ENCODE measurements at regions of chr13 and their contacts with region 1.

Region 1: DNA sequence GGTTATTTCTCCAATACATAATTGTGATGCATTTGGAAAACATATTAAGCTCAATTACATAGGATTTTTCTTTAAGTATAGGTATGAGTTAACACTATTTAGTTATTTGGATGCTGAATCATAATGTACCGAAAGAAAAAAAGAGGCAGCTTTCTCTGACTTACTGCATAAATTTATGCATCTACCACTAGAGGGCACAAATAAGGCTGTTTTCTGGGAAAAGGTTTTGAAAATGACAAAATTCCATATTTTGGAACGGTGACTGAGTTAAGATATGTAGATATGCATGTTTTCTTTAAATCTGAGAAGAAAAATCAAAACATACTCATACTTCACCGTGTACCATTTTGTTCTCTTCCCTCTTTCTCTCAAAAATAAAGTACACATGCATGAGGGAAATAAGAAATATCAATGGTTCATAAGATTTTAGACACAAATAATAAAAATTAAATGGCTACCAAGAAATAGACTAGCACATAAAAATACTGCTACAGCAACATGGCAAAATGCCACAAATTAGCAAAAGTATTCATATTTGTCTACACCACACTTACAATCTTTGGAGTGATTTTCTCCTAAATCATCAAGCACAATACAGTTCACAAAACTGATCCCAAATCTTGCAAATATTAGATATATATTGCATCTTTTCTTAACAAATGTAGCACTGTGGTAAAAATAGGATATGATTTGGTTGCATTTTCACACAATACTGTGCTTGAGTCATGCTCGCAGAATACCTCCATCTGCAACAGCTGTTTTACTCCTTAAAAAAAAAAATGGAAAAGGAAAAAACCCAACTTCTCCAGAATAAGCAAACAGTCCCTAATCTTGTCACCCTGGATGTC is 260.0 kb downstream of the FGF14 start:
- DNase-seq: no peak
- ATAC-seq: peak in 3 of 8 donors; percentile 28 to 52 (median 38)
- H3K4me3 ChIP-seq: no peak overlapping the region
- H3K27ac ChIP-seq: peak overlapping the region in 2 of 10 donors; percentile 4 to 9
- H3K4me1 ChIP-seq: peaks cover 0 to 18% (median 0%) of the 10 kb centered on the region in 9 donors
- H3K27me3 ChIP-seq: no peaks in the 10 kb centered on the region
- CTCF ChIP-seq: peak; percentile 45 to 78 (median 65)

Region 2: DNA sequence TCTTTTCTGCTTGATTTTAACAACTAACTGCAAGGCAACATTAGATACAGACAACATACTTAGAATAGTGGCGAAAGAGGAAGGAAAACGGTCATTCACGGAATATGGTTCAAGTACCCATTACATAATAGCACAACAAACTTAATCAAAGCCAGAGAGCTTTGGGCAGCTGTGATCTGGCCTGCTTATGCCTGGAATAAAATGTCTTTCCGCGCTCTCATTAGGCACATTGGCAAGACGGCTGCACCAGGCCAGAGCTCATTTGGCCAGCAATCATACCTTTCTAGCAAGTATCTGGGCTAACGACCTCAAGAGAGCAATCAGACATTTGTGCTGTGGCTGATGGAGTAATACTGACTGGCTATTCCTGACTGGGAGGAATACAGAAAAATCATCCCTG is 838.3 kb before region 1 on chr13:
- intact Hi-C with region 1: no loop called
- DNase-seq: no peak
- ATAC-seq: no peak
- H3K4me3 ChIP-seq: no peak overlapping the region
- H3K27ac ChIP-seq: no peak overlapping the region
- H3K4me1 ChIP-seq: no peaks in the 10 kb centered on the region
- H3K27me3 ChIP-seq: no peaks in the 10 kb centered on the region
- CTCF ChIP-seq: no peak

Region 3: DNA sequence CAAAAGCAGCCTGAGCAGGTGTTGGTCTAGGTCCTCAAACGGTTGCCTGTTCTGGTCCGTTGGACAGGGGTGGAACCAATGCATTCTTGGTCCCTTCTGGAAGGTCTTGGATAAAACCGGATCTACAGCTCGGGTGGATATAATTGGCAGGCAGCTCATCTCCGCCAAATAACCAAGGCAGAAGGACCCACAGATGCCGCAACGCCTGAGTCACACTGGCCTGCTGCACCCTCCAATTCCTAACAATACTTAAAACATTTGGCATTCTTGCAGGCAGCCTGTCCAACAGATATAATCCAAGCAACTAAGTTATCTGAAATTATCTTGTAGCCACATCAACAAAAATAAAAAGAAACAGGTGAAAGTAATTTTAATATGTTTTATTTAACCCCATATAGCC is 319.0 kb after region 1 on chr13:
- intact Hi-C with region 1: loop called in 6 of 10 experiments (anchors 5 to 10 kb)
- DNase-seq: no peak
- ATAC-seq: no peak
- H3K4me3 ChIP-seq: no peak overlapping the region
- H3K27ac ChIP-seq: no peak overlapping the region
- H3K4me1 ChIP-seq: no peaks in the 10 kb centered on the region
- H3K27me3 ChIP-seq: peaks cover 0 to 9% (median 0%) of the 10 kb centered on the region in 7 donors
- CTCF ChIP-seq: no peak

Region 4: GRCh38 chr13:102596147-102597028 is 454.5 kb after region 1 on chr13 and contains the start of gene TPP2:
- intact Hi-C with region 1: no loop called
- DNase-seq: peak; percentile 99 to 100
- ATAC-seq: peak; percentile 98 to 99 (median 99)
- H3K4me3 ChIP-seq: peak within 1 kb of the TSS; percentile 74 to 98 (median 86)
- H3K27ac ChIP-seq: peak within 1 kb of the TSS; percentile 93 to 99 (median 98)
- H3K4me1 ChIP-seq: peaks cover 4 to 71% (median 49%) of the 10 kb centered on the region in 9 donors
- H3K27me3 ChIP-seq: no peaks in the 10 kb centered on the region
- CTCF ChIP-seq: no peak
- total RNA-seq, gene TPP2: 28.5 to 36.8 (median 32.6) TPM

Measured in heart right ventricle (tissue), 16 donors.